ENCODE measurements at regions of chr2 and their contacts with region 1.

Region 1: DNA sequence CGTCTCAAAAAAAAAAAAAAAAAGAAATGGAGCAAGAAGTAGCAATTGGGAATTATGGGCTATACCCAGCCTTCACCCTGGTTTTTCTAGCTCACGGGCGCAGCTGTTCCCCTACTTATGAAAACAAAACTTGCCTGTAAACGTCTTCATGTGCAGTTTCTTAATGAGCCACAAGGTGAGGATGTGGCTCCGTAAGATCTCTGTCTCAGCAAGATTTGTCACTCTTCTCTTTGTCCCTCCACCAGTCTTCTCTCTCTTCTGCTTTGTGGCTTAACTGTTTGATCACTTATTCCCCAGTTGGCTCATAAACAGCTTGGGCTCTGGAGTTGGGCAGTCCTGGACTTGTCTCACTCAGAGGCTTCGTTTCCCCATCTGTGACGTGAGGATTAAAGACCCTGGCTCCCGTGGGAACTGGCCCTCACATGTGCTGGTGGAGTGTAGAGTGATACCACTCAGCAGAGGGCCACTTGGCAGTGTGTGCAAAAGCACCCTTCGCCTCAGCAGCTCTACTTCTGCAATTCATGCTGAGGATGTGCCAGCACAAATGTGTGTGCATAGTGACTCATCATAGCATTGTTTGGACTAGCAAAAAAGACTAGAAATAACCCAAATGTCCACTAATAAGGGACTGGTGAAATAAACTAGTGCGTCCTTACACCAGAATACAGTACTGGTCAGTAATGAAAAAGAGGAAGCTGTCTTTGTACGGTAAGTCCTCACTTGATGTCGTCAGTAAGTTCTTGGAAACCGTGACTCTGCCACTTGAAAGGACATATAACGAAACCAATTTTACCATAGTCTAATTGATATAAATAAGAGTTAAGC is 8.7 kb downstream of the CEP68 start:
- DNase-seq: peak; percentile 91 to 98 (median 96)
- H3K4me3 ChIP-seq: peak overlapping the region in 4 of 7 experiments; percentile 28 to 66 (median 33)
- H3K27ac ChIP-seq: peak overlapping the region; percentile 62 to 81
- H3K4me1 ChIP-seq: peaks cover 18 to 78% (median 72%) of the 10 kb centered on the region in 4 experiments
- H3K27me3 ChIP-seq: no peaks in the 10 kb centered on the region

Region 2: GRCh38 chr2:65075605-65076344 is 10.8 kb after region 1 on chr2:
- CTCF ChIA-PET with region 1: interaction called, 20 read pairs
- POLR2A ChIA-PET with region 1: interaction called, 7 read pairs
- DNase-seq: no peak
- H3K4me3 ChIP-seq: no peak overlapping the region
- H3K27ac ChIP-seq: peak overlapping the region in 1 of 2 experiments; percentile 32
- H3K4me1 ChIP-seq: peaks cover 0 to 22% (median 12%) of the 10 kb centered on the region in 4 experiments
- H3K27me3 ChIP-seq: no peaks in the 10 kb centered on the region

Region 3: DNA sequence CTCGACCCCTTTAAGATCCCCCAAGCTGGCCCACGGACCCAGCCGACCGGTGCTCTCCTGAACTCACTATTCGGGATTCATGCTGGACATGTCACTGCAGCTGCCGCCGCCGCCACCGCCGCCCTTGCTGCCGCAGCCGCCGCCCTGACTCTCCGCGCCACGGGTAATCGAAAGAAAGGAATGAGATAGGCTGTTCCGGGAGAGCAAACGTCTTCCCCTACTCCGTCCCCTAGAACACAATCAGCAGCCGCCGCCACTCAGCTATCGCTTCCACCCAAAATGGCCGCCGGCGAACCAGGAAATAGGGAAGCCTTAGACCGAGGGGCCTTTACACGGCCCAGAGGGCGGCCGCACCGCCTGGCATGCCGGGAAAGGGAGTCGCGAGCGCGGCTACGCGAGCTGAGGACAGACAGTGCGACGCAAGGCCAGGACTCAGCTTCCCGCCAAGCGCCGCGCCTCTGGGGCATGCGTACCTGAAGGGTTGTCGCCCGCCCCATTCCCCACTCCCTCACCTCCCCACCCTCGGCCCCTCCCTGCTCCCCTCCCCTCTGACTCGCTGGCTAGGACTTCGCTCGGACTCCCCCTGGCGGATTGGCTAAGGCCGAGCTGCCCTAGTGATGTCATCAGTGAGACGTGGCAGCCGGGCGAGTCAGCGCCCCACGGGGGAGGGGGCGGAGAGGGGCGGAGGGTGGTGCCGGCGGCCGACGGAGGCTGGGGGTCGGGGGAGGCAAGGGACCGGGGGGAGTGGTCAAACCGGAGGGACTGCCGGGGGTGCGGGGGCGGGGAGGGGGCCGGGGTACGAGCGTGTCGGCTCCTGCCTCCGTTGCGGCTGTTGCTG is 65.1 kb after region 1 on chr2 and contains the start of gene RAB1A:
- CTCF ChIA-PET with region 1: interaction called, 19 read pairs
- POLR2A ChIA-PET with region 1: interaction called, 6 read pairs
- DNase-seq: peak; percentile 100
- H3K4me3 ChIP-seq: peak within 1 kb of the TSS; percentile 94 to 100 (median 97)
- H3K27ac ChIP-seq: peak within 1 kb of the TSS; percentile 94 to 98
- H3K4me1 ChIP-seq: peaks cover 10 to 40% (median 24%) of the 10 kb centered on the region in 4 experiments
- H3K27me3 ChIP-seq: no peaks in the 10 kb centered on the region

Region 4: GRCh38 chr2:65164426-65164891 is 99.5 kb after region 1 on chr2:
- CTCF ChIA-PET with region 1: interaction called, 131 read pairs
- POLR2A ChIA-PET with region 1: interaction called, 3 read pairs
- DNase-seq: peak in 2 of 3 donors; percentile 50 to 58
- H3K4me3 ChIP-seq: no peak overlapping the region
- H3K27ac ChIP-seq: peak overlapping the region in 1 of 2 experiments; percentile 20
- H3K4me1 ChIP-seq: peaks cover 19 to 58% (median 48%) of the 10 kb centered on the region in 4 experiments
- H3K27me3 ChIP-seq: no peaks in the 10 kb centered on the region

Region 5: GRCh38 chr2:65193446-65193845 is 128.5 kb after region 1 on chr2:
- CTCF ChIA-PET with region 1: interaction called, 11 read pairs
- POLR2A ChIA-PET with region 1: no interaction called
- DNase-seq: peak in 1 of 3 donors; percentile 3
- H3K4me3 ChIP-seq: no peak overlapping the region
- H3K27ac ChIP-seq: no peak overlapping the region
- H3K4me1 ChIP-seq: no peaks in the 10 kb centered on the region
- H3K27me3 ChIP-seq: no peaks in the 10 kb centered on the region